ENCODE measurements at regions of chr17 and their contacts with region 1.

Region 1: GRCh38 chr17:61412143-61412859 is 12.7 kb downstream of the TBX2 start:
- DNase-seq: peak; percentile 71
- H3K4me3 Mint-ChIP-seq: peak overlapping the region; percentile 42
- H3K27ac Mint-ChIP-seq: no peak overlapping the region
- H3K4me1 Mint-ChIP-seq: peaks cover 8% of the 10 kb centered on the region
- H3K27me3 Mint-ChIP-seq: peaks cover 55% of the 10 kb centered on the region

Region 2: DNA sequence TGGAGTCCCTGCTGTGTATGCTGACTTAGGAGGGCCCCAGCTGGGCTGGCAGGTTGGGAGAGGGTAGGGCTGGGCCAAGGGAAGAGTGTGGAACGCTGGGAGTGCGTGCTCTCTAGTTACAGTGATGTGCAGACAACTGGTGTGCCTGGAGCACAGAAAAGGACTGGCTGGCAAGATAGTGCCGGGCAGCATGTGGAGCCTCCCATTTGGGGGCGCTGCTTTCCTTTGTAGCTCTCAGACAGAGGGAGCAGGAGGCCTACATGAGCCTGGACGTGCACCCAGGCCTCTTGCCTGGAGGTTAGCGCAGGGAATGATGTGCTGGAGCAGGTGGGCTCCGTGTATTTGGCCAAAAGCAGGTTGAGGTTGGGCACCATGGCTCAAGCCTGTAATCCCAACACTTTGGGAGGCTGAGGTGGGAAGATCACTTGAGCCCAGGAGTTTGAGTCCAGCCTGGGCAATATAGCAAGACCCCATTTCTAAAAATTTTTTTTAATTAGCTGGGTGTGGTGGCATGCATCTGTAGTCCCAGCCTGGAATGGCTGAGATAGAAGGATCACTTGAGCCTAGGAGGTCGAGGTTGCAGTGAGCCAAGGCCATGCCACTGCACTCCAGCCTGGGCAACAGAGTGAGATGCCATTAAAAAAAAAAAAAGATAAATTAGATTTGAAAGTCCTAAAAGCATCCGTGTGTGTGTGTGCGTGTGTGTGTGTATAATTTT is 13.9 kb after region 1 on chr17:
- intact Hi-C with region 1: no loop called
- DNase-seq: no peak
- H3K4me3 Mint-ChIP-seq: no peak overlapping the region
- H3K27ac Mint-ChIP-seq: no peak overlapping the region
- H3K4me1 Mint-ChIP-seq: no peaks in the 10 kb centered on the region
- H3K27me3 Mint-ChIP-seq: peaks cover 25% of the 10 kb centered on the region

Region 3: DNA sequence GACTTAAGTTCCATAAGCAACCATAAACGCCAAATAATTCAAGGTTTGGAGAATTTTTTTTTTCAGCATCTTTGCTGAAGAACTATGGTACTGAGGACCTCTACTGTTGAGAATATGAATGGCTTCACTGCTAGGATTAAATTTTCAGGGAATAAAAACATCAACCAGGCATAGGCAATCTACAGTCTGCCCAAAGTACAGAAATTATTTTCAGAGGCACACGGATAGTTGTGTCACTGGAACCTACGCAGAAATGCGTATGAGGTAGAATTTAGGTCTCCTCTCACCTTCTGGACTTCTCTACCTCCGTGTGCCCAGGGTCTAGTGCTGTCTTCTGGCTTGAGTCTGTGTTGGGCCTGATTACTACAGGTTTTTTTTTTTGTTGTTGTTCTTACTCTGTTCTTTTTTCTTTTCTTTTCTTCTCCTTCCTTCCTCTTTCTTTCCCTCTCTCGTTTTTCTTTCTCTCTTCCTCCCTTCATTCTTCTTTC is 139.0 kb after region 1 on chr17:
- intact Hi-C with region 1: loop called (anchors 1 kb)
- DNase-seq: no peak
- H3K4me3 Mint-ChIP-seq: no peak overlapping the region
- H3K27ac Mint-ChIP-seq: no peak overlapping the region
- H3K4me1 Mint-ChIP-seq: peaks cover 3% of the 10 kb centered on the region
- H3K27me3 Mint-ChIP-seq: peaks cover 37% of the 10 kb centered on the region

Region 4: GRCh38 chr17:61583242-61583641 is 170.9 kb after region 1 on chr17:
- intact Hi-C with region 1: loop called (anchors 2 kb)
- DNase-seq: no peak
- H3K4me3 Mint-ChIP-seq: no peak overlapping the region
- H3K27ac Mint-ChIP-seq: no peak overlapping the region
- H3K4me1 Mint-ChIP-seq: no peaks in the 10 kb centered on the region
- H3K27me3 Mint-ChIP-seq: peaks cover 25% of the 10 kb centered on the region

Region 5: GRCh38 chr17:61837175-61838051 is 425.1 kb after region 1 on chr17:
- intact Hi-C with region 1: loop called (anchors 2 kb)
- DNase-seq: peak; percentile 19
- H3K4me3 Mint-ChIP-seq: no peak overlapping the region
- H3K27ac Mint-ChIP-seq: no peak overlapping the region
- H3K4me1 Mint-ChIP-seq: no peaks in the 10 kb centered on the region
- H3K27me3 Mint-ChIP-seq: no peaks in the 10 kb centered on the region

Measured in activated T-helper 2 cell treated with anti-CD3 and anti-CD28 coated beads, Interferon-gamma antibody, Interleukin-2, Interleukin-4, amounts not matched to agents 10 μg/mL and 5 μg/mL and 100 μg/mL, durations not matched to agents 14 hours and 24 hours and 36 hours (primary cell).